IMR-90 (cell line): ENCODE measurements at regions of chr7 and their contacts with region 1.

Region 1: GRCh38 chr7:92621026-92621540 is 30.9 kb upstream of the FAM133B start:
- DNase-seq: peak; percentile 94
- ATAC-seq: peak; percentile 84
- H3K4me3 ChIP-seq: no peak overlapping the region
- H3K27ac ChIP-seq: peak overlapping the region; percentile 45; the same call in 1 of the 2 replicates
- H3K4me1 ChIP-seq: peaks cover 6% of the 10 kb centered on the region
- H3K27me3 ChIP-seq: no peaks in the 10 kb centered on the region
- CTCF ChIP-seq: peak; percentile 84
- POLR2A ChIP-seq: no peak
- RAD21 ChIP-seq: peak; percentile 89

Region 2: DNA sequence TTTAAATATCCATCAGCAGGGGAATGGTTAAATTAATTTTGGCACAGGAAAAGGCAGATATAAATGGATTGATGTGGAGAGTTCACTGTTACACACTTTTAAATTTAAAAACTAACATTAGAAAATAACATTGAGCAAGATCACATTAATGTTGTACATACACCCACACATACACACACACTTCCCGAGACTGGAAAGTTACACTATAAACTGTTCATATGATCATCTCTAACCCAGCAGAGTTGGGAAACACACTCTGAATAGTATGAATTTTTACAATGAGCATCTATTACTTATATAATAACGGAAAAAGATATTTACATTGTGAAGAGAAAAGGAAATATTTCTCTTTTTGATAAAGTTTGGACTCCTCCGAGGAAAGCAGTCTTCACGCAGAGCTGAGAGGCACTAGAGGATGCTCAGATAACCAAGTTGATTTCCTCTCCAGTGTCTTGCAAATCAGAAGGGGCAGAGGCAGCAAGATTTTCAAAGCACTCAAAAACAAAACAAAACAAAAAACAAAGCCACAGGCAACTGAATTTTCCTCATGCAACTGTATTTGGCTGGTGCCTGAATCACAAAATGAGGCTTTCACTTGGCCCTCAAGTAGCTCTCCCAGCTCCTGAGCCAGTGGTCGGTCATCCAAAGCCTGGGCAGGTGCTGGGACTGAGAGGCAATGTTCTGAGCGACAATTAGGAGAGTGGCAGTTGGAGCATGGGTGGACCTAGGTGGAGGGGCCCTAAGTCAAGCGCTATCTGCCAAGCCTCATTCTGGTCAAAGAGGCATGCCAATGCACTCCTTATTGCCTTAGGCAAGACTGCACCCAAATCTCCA is 184.3 kb before region 1 on chr7:
- CTCF ChIA-PET with region 1: no interaction called
- POLR2A ChIA-PET with region 1: no interaction called
- dilution Hi-C with region 1: no loop called
- in situ Hi-C with region 1: no loop called
- intact Hi-C with region 1: no loop called
- DNase-seq: peak; percentile 11
- ATAC-seq: no peak; the same call in 1 of the 2 replicates
- H3K4me3 ChIP-seq: no peak overlapping the region
- H3K27ac ChIP-seq: no peak overlapping the region
- H3K4me1 ChIP-seq: no peaks in the 10 kb centered on the region
- H3K27me3 ChIP-seq: peaks cover 11% of the 10 kb centered on the region
- CTCF ChIP-seq: no peak
- POLR2A ChIP-seq: no peak
- RAD21 ChIP-seq: no peak

Region 3: DNA sequence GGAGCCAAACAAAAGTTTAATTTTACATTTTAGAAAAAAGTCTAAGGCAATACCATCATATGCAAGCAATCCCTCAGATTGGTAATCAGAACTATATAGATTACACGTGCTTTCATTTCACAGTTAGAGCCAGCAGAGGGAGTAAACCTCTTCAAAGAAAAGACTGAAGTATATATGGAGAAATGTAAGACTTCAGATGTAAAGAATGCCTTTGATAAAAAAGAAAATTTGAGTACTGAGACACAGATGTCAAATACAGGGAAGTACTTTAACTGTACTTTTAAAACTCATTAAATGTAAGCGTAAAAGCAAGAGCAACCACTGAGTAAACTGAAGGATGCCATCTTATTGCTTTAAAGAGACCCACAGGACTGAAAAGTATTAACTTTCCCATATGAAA is 70.5 kb after region 1 on chr7:
- CTCF ChIA-PET with region 1: interaction called, 3 read pairs
- POLR2A ChIA-PET with region 1: no interaction called
- dilution Hi-C with region 1: no loop called
- in situ Hi-C with region 1: loop called (anchors 5 kb)
- intact Hi-C with region 1: loop called (anchors 2 kb)
- DNase-seq: peak; percentile 76
- ATAC-seq: peak; percentile 30; the same call in 1 of the 2 replicates
- H3K4me3 ChIP-seq: no peak overlapping the region
- H3K27ac ChIP-seq: peak overlapping the region; percentile 36
- H3K4me1 ChIP-seq: peaks cover 2% of the 10 kb centered on the region; the same call in 1 of the 2 replicates
- H3K27me3 ChIP-seq: no peaks in the 10 kb centered on the region
- CTCF ChIP-seq: peak; percentile 61
- POLR2A ChIP-seq: no peak
- RAD21 ChIP-seq: peak; percentile 65

Region 4: DNA sequence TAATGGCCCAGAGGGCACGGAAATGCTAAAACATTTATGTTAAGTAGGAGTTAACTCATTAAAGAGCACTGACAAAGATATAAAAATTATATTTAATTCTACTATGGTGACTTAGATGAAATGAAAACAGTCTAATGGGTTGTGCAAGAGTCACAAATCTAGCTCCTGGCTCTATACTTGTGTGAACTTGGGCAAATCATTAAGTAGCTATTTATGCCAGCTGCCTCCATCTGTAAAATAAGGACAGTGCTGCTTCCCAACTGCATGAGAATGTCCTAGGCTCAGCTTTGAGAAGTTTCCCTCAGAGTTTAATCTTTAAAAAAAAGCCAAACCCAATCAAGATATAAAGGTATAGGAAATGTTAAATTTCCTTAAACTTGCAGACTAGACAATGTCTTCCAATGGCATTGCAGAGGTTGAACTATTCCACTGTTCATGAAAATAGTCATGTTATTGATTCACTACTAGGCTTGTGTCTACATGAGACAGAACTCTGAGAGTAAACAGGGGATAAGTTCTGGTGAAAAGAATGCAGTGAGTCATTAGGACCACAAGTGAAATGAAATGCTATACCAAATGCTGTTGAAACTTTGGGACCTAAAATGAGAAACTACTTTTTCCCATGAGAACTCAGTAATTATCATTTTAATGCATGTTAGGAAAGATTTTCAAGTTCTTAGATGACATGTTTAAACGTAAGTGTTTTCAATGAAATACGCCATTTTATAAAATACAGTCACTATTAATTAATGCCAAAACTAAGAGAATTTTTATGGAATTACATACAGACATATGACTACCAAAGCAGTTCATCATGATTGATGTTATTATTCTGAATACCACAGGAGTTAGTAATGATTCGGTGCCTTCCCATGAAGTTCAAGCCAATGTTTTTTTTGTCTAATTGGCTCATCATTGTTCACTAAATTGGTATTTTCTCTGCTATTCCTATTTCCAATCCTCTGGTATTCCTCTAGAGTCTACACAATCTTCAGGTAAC is 131.1 kb after region 1 on chr7:
- CTCF ChIA-PET with region 1: interaction called, 5 read pairs
- POLR2A ChIA-PET with region 1: no interaction called
- dilution Hi-C with region 1: no loop called
- in situ Hi-C with region 1: no loop called
- intact Hi-C with region 1: loop called (anchors 5 kb)
- DNase-seq: peak; percentile 98
- ATAC-seq: peak; percentile 82
- H3K4me3 ChIP-seq: no peak overlapping the region
- H3K27ac ChIP-seq: peak overlapping the region; percentile 43; the same call in 1 of the 2 replicates
- H3K4me1 ChIP-seq: peaks cover 25% of the 10 kb centered on the region
- H3K27me3 ChIP-seq: no peaks in the 10 kb centered on the region
- CTCF ChIP-seq: no peak
- POLR2A ChIP-seq: no peak
- RAD21 ChIP-seq: no peak

Region 5: DNA sequence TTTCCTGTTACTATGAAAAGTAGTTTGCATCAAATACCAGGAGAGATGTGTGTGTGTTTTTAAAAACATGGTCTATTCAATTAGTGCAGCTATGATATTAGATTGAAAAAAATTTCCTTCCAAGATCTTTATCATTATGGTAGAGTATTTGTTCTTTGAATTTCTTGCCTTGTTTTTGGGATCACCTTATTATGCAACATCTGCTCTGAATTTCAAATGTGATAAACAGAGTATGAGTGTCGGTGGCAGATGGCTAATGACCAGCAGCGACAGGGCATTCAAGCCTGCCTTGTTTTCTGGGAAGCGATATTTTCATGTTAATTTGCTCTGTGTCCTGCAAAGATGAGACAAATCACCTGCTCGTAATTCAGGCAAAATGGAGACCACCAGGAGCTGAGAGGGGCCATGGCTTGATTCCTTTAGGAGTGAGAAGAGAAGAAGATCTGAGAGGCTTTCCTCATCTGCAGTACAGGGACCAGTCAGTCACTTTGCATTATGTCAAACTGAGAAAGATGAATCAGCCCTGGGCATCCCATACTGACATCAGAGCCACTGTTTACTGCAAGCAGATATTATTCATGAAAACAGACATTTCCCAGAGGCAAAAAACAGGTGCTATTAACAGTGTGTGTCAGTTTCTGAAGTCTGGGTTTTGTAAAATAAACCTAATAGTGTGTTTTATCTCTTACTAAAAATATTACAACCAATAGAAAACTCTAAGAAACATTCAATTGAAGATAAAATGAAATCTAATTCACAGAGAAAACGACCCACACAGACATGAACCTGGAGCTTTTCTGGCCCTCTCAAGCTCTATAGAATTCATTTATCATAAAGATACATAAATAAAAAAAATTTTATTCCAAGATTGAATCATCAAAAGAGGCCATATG is 147.7 kb after region 1 on chr7:
- CTCF ChIA-PET with region 1: no interaction called
- POLR2A ChIA-PET with region 1: no interaction called
- dilution Hi-C with region 1: no loop called
- in situ Hi-C with region 1: no loop called
- intact Hi-C with region 1: loop called (anchors 5 kb)
- DNase-seq: peak; percentile 64
- ATAC-seq: no peak
- H3K4me3 ChIP-seq: no peak overlapping the region
- H3K27ac ChIP-seq: no peak overlapping the region; the same call in 1 of the 2 replicates
- H3K4me1 ChIP-seq: peaks cover 26% of the 10 kb centered on the region
- H3K27me3 ChIP-seq: no peaks in the 10 kb centered on the region
- CTCF ChIP-seq: no peak
- POLR2A ChIP-seq: no peak
- RAD21 ChIP-seq: no peak

Region 6: DNA sequence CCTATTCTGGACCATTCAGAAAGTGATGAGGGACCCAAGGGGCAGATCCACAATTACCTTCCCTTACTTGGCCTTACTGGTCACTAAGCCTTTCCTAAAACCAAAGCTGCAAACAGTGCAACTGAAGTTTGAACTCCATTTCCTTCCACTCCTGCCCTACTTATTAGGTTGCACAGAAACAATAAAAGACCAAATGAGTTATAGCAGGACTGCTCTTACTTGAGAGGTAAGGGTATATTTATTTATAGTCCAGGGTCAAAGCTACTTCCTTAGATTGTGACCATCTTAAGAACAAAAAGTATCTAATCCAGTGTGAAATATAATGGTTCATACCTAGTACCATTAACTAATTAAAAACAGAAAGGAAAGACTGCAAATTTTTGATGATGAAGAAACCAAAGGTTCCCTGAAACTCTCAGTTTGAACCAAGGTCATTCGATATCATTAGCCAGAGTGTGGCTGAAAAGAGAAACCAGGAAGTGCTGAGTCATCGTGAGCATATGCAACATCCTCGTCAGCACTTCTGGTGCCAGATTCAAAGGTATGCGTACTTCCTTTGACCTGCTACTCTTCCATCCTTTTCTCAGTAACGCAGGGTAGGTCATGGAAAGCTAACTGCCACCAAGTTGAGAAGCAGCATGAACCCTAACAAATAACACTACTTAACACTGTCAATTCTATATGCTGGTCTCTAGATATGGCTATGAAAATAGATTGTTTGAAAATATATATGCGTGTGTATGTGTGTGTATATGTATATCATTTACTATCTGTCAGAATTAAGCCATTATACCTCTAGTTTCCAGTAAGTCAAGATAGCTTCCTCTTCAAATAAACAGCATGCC is 188.5 kb after region 1 on chr7:
- CTCF ChIA-PET with region 1: no interaction called
- POLR2A ChIA-PET with region 1: no interaction called
- dilution Hi-C with region 1: no loop called
- in situ Hi-C with region 1: no loop called
- intact Hi-C with region 1: no loop called
- DNase-seq: peak; percentile 97
- ATAC-seq: peak; percentile 77
- H3K4me3 ChIP-seq: no peak overlapping the region
- H3K27ac ChIP-seq: peak overlapping the region; percentile 68
- H3K4me1 ChIP-seq: peaks cover 7% of the 10 kb centered on the region
- H3K27me3 ChIP-seq: no peaks in the 10 kb centered on the region
- CTCF ChIP-seq: no peak
- POLR2A ChIP-seq: no peak
- RAD21 ChIP-seq: no peak

Region 7: DNA sequence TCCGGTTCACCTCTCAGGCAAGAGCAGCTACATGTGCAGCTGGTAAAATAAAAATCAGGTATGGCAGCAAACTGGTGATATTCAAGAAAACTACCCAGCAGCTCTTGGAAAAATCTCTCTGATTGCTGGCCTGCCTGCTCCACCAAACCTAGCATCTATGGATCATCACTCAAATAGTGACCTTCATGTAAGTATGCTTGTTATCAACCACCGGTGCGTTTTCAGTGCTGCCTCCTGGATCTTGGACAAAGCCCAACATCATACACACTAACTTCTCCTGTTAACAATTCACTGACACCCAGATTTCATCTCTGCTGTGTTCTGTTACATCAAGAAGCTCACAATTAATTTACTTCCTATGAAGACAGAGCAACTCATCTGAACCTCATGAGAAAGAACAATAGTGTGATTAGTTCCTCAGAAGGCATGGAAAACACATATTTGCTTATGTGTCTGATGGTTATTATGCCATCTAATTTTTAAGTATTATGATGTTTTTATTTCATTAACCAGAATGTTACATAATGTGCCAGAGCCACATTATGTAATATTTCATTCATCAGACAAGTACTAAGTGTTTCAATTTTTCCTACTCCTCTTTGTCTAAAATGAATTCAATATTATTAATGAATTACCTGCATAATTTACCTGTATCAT is 206.5 kb after region 1 on chr7:
- CTCF ChIA-PET with region 1: interaction called, 4 read pairs
- POLR2A ChIA-PET with region 1: no interaction called
- dilution Hi-C with region 1: no loop called
- in situ Hi-C with region 1: loop called (anchors 5 kb)
- intact Hi-C with region 1: loop called (anchors 1 kb)
- DNase-seq: no peak
- ATAC-seq: no peak
- H3K4me3 ChIP-seq: no peak overlapping the region
- H3K27ac ChIP-seq: no peak overlapping the region
- H3K4me1 ChIP-seq: peaks cover 12% of the 10 kb centered on the region
- H3K27me3 ChIP-seq: no peaks in the 10 kb centered on the region
- CTCF ChIP-seq: no peak
- POLR2A ChIP-seq: no peak
- RAD21 ChIP-seq: no peak

Region 8: DNA sequence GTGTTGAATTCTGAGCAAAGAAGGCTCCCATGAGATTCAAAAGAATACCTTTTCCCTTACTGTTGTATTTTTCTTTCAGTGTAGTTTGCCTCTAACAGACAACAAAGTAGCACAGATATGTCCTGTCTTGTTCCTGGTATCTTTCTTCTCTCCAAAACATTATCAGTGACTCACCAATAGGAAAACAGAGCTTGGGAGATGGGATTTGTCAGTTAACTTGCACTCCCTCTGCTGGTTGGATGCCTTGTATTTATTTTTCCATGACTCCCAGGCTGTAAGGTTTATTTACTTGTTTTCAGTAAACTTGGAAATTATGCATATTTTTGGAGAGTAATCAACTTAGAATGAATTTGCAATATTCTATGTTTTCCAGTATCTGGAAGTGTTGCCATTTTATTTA is 367.0 kb after region 1 on chr7:
- CTCF ChIA-PET with region 1: no interaction called
- POLR2A ChIA-PET with region 1: no interaction called
- dilution Hi-C with region 1: no loop called
- in situ Hi-C with region 1: no loop called
- intact Hi-C with region 1: loop called (anchors 2 kb)
- DNase-seq: peak; percentile 78
- ATAC-seq: peak; percentile 64
- H3K4me3 ChIP-seq: no peak overlapping the region
- H3K27ac ChIP-seq: no peak overlapping the region
- H3K4me1 ChIP-seq: peaks cover 7% of the 10 kb centered on the region
- H3K27me3 ChIP-seq: no peaks in the 10 kb centered on the region
- CTCF ChIP-seq: peak; percentile 52
- POLR2A ChIP-seq: no peak
- RAD21 ChIP-seq: peak; percentile 58

Region 9: GRCh38 chr7:93231799-93232672 is 611.0 kb after region 1 on chr7 and contains the start of gene VPS50:
- CTCF ChIA-PET with region 1: no interaction called
- POLR2A ChIA-PET with region 1: no interaction called
- dilution Hi-C with region 1: no loop called
- in situ Hi-C with region 1: no loop called
- intact Hi-C with region 1: loop called (anchors 5 kb)
- DNase-seq: peak; percentile 93
- ATAC-seq: peak; percentile 100
- H3K4me3 ChIP-seq: peak within 1 kb of the TSS; percentile 80
- H3K27ac ChIP-seq: peak within 1 kb of the TSS; percentile 64
- H3K4me1 ChIP-seq: no peaks in the 10 kb centered on the region
- H3K27me3 ChIP-seq: peaks cover under 1% of the 10 kb centered on the region; the same call in 1 of the 2 replicates
- CTCF ChIP-seq: no peak
- POLR2A ChIP-seq: no peak
- RAD21 ChIP-seq: no peak
- total RNA-seq, gene VPS50: 22.0 and 26.7 TPM in 2 replicates